Dorsolateral prefrontal cortex (tissue), 120 donors: ENCODE measurements at regions of chr16 and their contacts with region 1.

Region 1: GRCh38 chr16:84277237-84277823 is 17.3 kb upstream of the WFDC1 start:
- DNase-seq: peak; percentile 42 to 77 (median 74)
- H3K4me3 ChIP-seq: no peak overlapping the region
- H3K27ac ChIP-seq: peak overlapping the region in 1 of 59 donors; percentile 31
- H3K27me3 ChIP-seq: peaks cover 0 to 4% (median 0%) of the 10 kb centered on the region in 45 donors
- CTCF ChIP-seq: peak; percentile 82 to 99 (median 95)

Region 2: GRCh38 chr16:84357191-84357651 is 79.9 kb after region 1 on chr16:
- intact Hi-C with region 1: loop called in 1 of 2 experiments (anchors 5 kb)
- DNase-seq: peak in 1 of 10 donors; percentile 31
- H3K4me3 ChIP-seq: peak overlapping the region in 1 of 59 donors; percentile 3
- H3K27ac ChIP-seq: peak overlapping the region in 58 of 59 donors; percentile 40 to 93 (median 87)
- H3K27me3 ChIP-seq: no peaks in the 10 kb centered on the region
- CTCF ChIP-seq: no peak

Region 3: GRCh38 chr16:84484579-84485254 is 207.4 kb after region 1 on chr16:
- intact Hi-C with region 1: loop called (anchors 1 to 5 kb)
- DNase-seq: peak; percentile 68 to 89 (median 78)
- H3K4me3 ChIP-seq: peak overlapping the region in 1 of 59 donors; percentile 32
- H3K27ac ChIP-seq: peak overlapping the region in 23 of 59 donors; percentile 5 to 72 (median 52)
- H3K27me3 ChIP-seq: no peaks in the 10 kb centered on the region
- CTCF ChIP-seq: peak; percentile 64 to 96 (median 88)